ENCODE measurements at regions of chr7 and their contacts with region 1.

Region 1: GRCh38 chr7:77935652-77936348 is 137.2 kb downstream of the PHTF2 start:
- DNase-seq: no peak
- H3K4me3 Mint-ChIP-seq: peak overlapping the region; percentile 13
- H3K27ac Mint-ChIP-seq: no peak overlapping the region
- H3K4me1 Mint-ChIP-seq: peaks cover 21% of the 10 kb centered on the region
- H3K27me3 Mint-ChIP-seq: no peaks in the 10 kb centered on the region

Region 2: GRCh38 chr7:77696198-77697028 is 239.4 kb before region 1 on chr7 and contains the start of gene RSBN1L:
- CTCF ChIA-PET with region 1: interaction called, 11 read pairs
- POLR2A ChIA-PET with region 1: interaction called, 4 read pairs
- DNase-seq: peak; percentile 99
- H3K4me3 Mint-ChIP-seq: peak within 1 kb of the TSS; percentile 98
- H3K27ac Mint-ChIP-seq: peak within 1 kb of the TSS; percentile 94
- H3K4me1 Mint-ChIP-seq: peaks cover 51% of the 10 kb centered on the region
- H3K27me3 Mint-ChIP-seq: no peaks in the 10 kb centered on the region
- total RNA-seq, gene RSBN1L: 28.7 to 29.5 TPM

Region 3: GRCh38 chr7:77913977-77914607 is 21.7 kb before region 1 on chr7:
- CTCF ChIA-PET with region 1: interaction called, 10 read pairs
- POLR2A ChIA-PET with region 1: interaction called, 5 read pairs
- DNase-seq: no peak
- H3K4me3 Mint-ChIP-seq: peak overlapping the region; percentile 2
- H3K27ac Mint-ChIP-seq: peak overlapping the region; percentile 67
- H3K4me1 Mint-ChIP-seq: peaks cover 30% of the 10 kb centered on the region
- H3K27me3 Mint-ChIP-seq: no peaks in the 10 kb centered on the region

Region 4: GRCh38 chr7:77982926-77983550 is 47.2 kb after region 1 on chr7:
- CTCF ChIA-PET with region 1: no interaction called
- POLR2A ChIA-PET with region 1: no interaction called
- DNase-seq: peak; percentile 57
- H3K4me3 Mint-ChIP-seq: peak overlapping the region; percentile 21
- H3K27ac Mint-ChIP-seq: no peak overlapping the region
- H3K4me1 Mint-ChIP-seq: peaks cover 21% of the 10 kb centered on the region
- H3K27me3 Mint-ChIP-seq: peaks cover 9% of the 10 kb centered on the region

Measured in activated CD4-positive, alpha-beta memory T cell treated with anti-CD3 and anti-CD28 coated beads, Interleukin-2, amount 10 ng/mL, durations not matched to agents 7 days and 5 days (primary cell).